ENCODE measurements at regions of chr19 and their contacts with region 1.

Region 1: GRCh38 chr19:2900296-2901252 is at the start of gene ZNF57:
- DNase-seq: peak; percentile 98
- ATAC-seq: peak; percentile 96
- H3K4me3 ChIP-seq: peak within 1 kb of the TSS; percentile 72 to 82
- H3K27ac ChIP-seq: peak within 1 kb of the TSS; percentile 68
- H3K4me1 ChIP-seq: peaks cover 4 to 12% of the 10 kb centered on the region in 2 experiments; a peak in 3 of 4 replicates
- H3K27me3 ChIP-seq: no peaks in the 10 kb centered on the region
- CTCF ChIP-seq: no peak
- POLR2A ChIP-seq: peak; percentile 25
- RAD21 ChIP-seq: no peak
- total RNA-seq, gene ZNF57: 8.3 TPM

Region 2: GRCh38 chr19:2759362-2759761 is 141.2 kb before region 1 on chr19:
- CTCF ChIA-PET with region 1: no interaction called
- POLR2A ChIA-PET with region 1: no interaction called
- RAD21 ChIA-PET with region 1: no interaction called
- intact Hi-C with region 1: no loop called
- DNase-seq: no peak
- ATAC-seq: no peak
- H3K4me3 ChIP-seq: no peak overlapping the region
- H3K27ac ChIP-seq: no peak overlapping the region
- H3K4me1 ChIP-seq: no peaks in the 10 kb centered on the region
- H3K27me3 ChIP-seq: no peaks in the 10 kb centered on the region
- CTCF ChIP-seq: no peak
- POLR2A ChIP-seq: no peak
- RAD21 ChIP-seq: no peak

Region 3: DNA sequence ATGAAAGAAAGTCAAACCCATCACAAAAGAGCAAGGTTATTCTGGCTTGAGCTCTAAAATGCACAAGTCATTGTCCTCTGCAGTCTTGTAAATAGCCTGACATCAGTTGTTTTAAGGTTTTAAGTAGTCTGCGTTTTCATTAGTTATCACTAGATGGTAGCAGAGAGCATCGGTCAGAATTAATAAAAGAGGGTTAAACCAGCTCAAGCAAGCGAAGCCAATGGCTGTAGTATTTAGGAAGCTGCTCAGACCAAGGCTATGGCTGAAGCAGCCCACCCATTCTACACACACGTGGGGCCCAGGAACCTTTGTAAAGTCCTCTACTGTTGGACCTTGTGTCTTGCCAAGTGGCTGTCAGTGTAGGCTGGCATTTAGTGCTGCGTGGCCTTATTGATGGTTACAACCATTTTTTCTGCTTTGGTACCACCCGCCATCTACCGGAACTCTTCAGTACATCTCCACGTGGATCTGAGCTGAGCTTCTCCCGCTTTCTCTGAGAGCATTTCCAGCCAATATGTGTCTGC is 13.1 kb before region 1 on chr19:
- CTCF ChIA-PET with region 1: interaction called, 15 read pairs
- POLR2A ChIA-PET with region 1: interaction called, 6 read pairs
- RAD21 ChIA-PET with region 1: interaction called in 1 of 2 experiments, 4 read pairs
- intact Hi-C with region 1: no loop called
- DNase-seq: peak; percentile 64
- ATAC-seq: peak; percentile 90
- H3K4me3 ChIP-seq: no peak overlapping the region
- H3K27ac ChIP-seq: no peak overlapping the region
- H3K4me1 ChIP-seq: no peaks in the 10 kb centered on the region
- H3K27me3 ChIP-seq: no peaks in the 10 kb centered on the region
- CTCF ChIP-seq: peak; percentile 47 to 64 (median 56); a peak in 5 of 6 replicates
- POLR2A ChIP-seq: no peak
- RAD21 ChIP-seq: peak; percentile 68

Region 4: DNA sequence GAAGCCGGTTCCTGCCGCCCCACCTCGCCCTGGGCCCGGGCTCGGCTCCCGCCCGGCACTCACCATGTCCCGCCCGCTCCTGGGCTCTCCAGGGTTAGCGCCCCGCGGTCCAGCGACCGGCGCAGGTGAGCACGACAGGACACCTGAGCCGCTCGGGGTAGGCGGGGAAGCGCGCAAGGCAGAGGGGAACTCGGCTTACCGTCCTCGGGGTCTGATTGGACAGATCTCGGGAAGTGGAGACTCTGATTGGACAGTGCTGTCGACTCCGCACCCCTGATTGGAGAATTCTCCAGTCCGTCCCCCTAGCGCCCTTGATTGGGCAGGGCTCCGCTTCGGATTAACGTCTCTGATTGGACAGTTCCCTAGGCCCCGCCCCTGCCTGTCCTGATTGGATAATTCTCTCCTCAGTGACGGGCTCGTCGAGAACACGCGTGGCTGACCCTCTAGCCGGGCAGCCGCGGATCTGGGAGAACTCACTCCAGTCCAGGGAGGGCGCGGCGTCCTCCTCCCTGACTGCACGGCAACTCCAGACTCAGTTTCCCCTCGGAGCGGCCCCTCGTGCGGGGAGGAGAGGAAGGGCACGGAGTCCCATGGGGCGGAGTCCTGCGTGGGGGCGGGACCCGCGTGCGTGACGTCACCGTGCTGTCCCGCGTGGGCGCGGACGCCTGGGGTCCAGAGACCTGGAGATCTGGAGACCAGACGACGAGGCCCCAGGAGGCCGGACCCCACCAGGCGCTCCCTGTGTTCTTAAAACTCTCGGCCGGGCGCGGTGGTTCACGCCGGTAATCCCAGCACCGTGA is 44.4 kb after region 1 on chr19 and contains the start of gene ZNF77:
- CTCF ChIA-PET with region 1: no interaction called
- POLR2A ChIA-PET with region 1: interaction called, 3 read pairs
- RAD21 ChIA-PET with region 1: no interaction called
- intact Hi-C with region 1: loop called (anchors 5 kb)
- DNase-seq: peak; percentile 99
- ATAC-seq: peak; percentile 96
- H3K4me3 ChIP-seq: peak within 1 kb of the TSS; percentile 85 to 95
- H3K27ac ChIP-seq: peak within 1 kb of the TSS; percentile 86
- H3K4me1 ChIP-seq: peaks cover 6 to 26% of the 10 kb centered on the region in 2 experiments; a peak in 3 of 4 replicates
- H3K27me3 ChIP-seq: no peaks in the 10 kb centered on the region
- CTCF ChIP-seq: no peak
- POLR2A ChIP-seq: peak; percentile 59
- RAD21 ChIP-seq: no peak
- total RNA-seq, gene ZNF77: 5.9 TPM

Measured in HCT116 (cell line).